Aorta (tissue), 5 donors: ENCODE measurements at regions of chr16 and their contacts with region 1.

Region 1: GRCh38 chr16:68328151-68328859 is 17.5 kb downstream of the PRMT7 start:
- DNase-seq: peak; percentile 79 to 85
- ATAC-seq: peak; percentile 94
- H3K4me3 ChIP-seq: no peak overlapping the region
- H3K27ac ChIP-seq: no peak overlapping the region
- H3K4me1 ChIP-seq: peaks cover 0 to 2% of the 10 kb centered on the region in 2 donors
- H3K27me3 ChIP-seq: no peaks in the 10 kb centered on the region

Region 2: DNA sequence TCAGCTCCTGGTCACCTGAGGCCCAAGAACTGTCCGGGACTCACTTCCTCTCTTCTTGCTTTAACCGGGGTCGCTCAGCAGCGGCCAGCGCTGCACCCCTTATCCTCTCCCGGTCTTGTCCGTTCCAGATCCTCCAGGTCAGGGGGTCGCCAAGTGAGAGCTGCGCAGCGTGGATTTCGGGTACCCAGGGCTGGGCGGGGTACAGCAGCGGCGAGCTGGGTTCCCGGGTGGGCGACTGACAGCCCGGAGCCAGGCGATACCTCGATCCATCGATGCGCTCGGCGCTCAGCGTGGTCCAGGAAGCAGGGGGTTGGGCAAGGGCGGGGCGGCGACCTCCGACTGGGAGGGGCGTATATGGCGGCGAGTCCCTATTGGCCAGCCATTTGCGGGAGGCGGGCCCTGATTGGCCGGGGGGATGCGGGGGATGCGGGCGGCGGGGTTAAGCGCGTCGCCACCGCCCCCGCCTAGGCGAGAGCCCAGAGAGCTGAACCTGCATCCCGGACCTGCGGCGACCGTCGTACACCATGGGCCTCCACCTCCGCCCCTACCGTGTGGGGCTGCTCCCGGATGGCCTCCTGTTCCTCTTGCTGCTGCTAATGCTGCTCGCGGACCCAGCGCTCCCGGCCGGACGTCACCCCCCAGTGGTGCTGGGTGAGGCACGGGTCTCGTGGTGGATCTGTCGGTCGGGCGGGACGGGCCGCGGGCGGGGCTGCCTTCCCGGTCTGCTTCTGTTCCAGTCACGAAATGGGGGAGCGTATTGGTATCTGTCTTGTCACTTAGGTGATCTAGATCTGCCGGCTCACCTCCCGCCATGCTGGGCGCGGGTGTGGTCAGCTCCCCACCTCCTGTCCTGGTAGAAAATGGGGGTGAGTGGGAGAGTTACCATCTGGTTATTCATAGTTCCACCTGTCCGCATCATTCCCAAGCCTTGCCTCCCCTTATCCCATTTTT is 83.1 kb before region 1 on chr16 and contains the start of gene PLA2G15:
- intact Hi-C with region 1: loop called (anchors 1 to 5 kb)
- DNase-seq: peak; percentile 98 to 100
- ATAC-seq: peak; percentile 98
- H3K4me3 ChIP-seq: peak within 1 kb of the TSS; percentile 58 to 88
- H3K27ac ChIP-seq: no peak within 1 kb of the TSS
- H3K4me1 ChIP-seq: no peaks in the 10 kb centered on the region
- H3K27me3 ChIP-seq: no peaks in the 10 kb centered on the region
- total RNA-seq, gene PLA2G15: 13.6 to 28.4 TPM

Region 3: GRCh38 chr16:68264128-68265077 is 63.9 kb before region 1 on chr16 and contains the start of gene SLC7A6:
- intact Hi-C with region 1: loop called (anchors 2 to 5 kb)
- DNase-seq: peak; percentile 84 to 95
- ATAC-seq: peak; percentile 76
- H3K4me3 ChIP-seq: peak within 1 kb of the TSS; percentile 37 to 46
- H3K27ac ChIP-seq: peak within 1 kb of the TSS; percentile 65 to 82
- H3K4me1 ChIP-seq: no peaks in the 10 kb centered on the region
- H3K27me3 ChIP-seq: no peaks in the 10 kb centered on the region
- total RNA-seq, gene SLC7A6: 47.0 to 52.4 TPM